Dendritic cell treated with granulocyte-macrophage colony-stimulating factor and Interleukin-4, amounts not matched to agents 40 ng/mL and 50 ng/mL, for 4 days (primary cell): ENCODE measurements at regions of chr18 and their contacts with region 1.

Region 1: DNA sequence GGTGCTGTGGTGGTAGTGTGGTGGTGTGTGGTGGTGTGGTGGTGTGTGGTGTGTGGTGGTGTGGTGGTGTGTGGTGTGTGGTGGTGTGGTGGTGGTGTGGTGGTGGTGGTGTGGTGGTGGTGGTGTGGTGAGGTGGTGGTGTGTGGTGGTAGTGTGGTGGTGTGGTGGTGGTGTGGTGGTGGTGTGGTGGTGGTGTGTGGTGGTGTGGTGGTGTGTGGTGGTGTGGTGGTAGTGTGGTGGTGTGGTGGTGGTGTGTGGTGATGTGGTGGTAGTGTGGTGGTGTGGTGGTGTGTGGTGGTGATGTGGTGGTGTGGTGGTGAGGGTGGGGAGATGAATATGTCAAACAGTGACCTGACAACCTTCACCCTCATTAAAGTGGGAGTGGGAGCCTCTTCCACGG is 55.6 kb upstream of the DLGAP1 start:
- H3K4me3 Mint-ChIP-seq: no peak overlapping the region
- H3K27ac Mint-ChIP-seq: no peak overlapping the region
- H3K4me1 Mint-ChIP-seq: no peaks in the 10 kb centered on the region
- H3K27me3 Mint-ChIP-seq: no peaks in the 10 kb centered on the region

Region 2: GRCh38 chr18:4551001-4551360 is 40.3 kb after region 1 on chr18:
- intact Hi-C with region 1: loop called (anchors 5 kb)
- H3K4me3 Mint-ChIP-seq: no peak overlapping the region
- H3K27ac Mint-ChIP-seq: no peak overlapping the region
- H3K4me1 Mint-ChIP-seq: no peaks in the 10 kb centered on the region
- H3K27me3 Mint-ChIP-seq: no peaks in the 10 kb centered on the region